IMR-90 (cell line): ENCODE measurements at regions of chr20 and their contacts with region 1.

Region 1: DNA sequence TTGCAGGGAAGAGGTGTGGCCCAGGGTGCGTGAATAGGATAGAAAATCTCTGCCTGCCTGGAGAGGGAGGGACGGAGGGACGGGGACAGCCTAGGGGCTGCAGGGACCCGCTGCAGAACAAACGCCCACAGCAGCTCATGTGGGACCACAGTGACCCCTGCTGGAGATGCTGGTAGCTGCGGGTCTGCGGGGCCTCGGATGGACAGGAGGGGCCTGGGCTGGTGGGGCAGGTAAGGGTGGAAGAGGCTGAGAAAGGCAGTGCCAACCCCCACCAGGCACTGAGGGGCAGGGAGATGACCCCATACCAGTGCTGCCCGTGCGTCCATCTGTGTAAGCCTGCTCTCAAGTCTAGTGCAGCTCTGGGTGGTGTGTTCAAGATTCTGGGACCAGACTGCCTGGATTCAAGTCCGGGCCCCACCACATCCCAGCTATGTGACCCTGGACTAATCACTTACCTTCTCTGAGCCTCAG is 39.4 kb downstream of the KIAA1755 start:
- DNase-seq: peak; percentile 52
- ATAC-seq: peak; percentile 57
- H3K4me3 ChIP-seq: no peak overlapping the region
- H3K27ac ChIP-seq: peak overlapping the region; percentile 6; the same call in 1 of the 2 replicates
- H3K4me1 ChIP-seq: peaks cover 24% of the 10 kb centered on the region
- H3K27me3 ChIP-seq: no peaks in the 10 kb centered on the region
- CTCF ChIP-seq: peak; percentile 89
- POLR2A ChIP-seq: peak; percentile 43; the same call in 1 of the 2 replicates
- RAD21 ChIP-seq: peak; percentile 95

Region 2: DNA sequence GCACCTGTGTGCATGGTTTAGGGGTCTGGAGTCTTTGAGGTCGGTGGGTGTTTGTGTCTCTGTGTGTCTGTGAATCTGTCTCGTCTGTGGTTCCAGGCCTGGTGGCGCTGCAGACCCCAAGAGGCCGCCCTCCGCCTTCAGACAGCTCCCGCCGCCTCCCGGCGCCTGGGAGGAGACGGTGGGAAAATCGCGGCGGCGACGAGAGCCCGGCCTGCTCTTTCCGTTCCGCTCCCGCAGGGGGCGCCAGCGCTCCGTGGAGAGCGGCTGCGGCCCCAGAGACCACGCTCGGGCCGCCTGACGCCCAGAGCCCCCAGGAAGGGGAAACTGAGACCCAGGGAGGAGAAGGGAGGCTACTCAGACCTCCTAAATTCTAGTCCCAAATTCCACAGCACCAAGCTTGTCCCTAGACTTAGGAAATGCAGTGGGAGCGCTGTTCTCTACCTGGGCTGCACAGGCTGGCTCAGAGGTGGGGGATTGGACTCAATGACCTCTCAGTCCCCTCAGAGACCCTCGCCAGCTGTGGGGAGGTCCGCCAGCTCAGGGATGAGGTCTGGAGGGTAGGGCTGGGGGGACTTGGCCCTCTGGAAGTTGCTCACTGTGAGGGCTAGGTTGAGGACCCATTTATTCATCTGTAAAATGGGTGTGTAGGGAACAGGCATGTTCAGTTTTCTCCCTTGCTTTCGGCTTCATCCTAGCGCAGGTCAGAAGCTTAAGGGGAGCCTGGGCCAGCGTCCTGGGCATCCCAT is 656.6 kb before region 1 on chr20:
- CTCF ChIA-PET with region 1: interaction called, 4 read pairs
- POLR2A ChIA-PET with region 1: no interaction called
- dilution Hi-C with region 1: no loop called
- in situ Hi-C with region 1: loop called (anchors 10 kb)
- intact Hi-C with region 1: no loop called
- DNase-seq: no peak
- ATAC-seq: peak; percentile 96
- H3K4me3 ChIP-seq: no peak overlapping the region
- H3K27ac ChIP-seq: no peak overlapping the region
- H3K4me1 ChIP-seq: no peaks in the 10 kb centered on the region; the same call in 1 of the 2 replicates
- H3K27me3 ChIP-seq: peaks cover 53% of the 10 kb centered on the region
- CTCF ChIP-seq: peak; percentile 95
- POLR2A ChIP-seq: no peak
- RAD21 ChIP-seq: peak; percentile 95

Region 3: GRCh38 chr20:37901654-37902503 is 319.3 kb before region 1 on chr20:
- CTCF ChIA-PET with region 1: no interaction called
- POLR2A ChIA-PET with region 1: no interaction called
- dilution Hi-C with region 1: no loop called
- in situ Hi-C with region 1: no loop called
- intact Hi-C with region 1: loop called (anchors 2 kb)
- DNase-seq: peak; percentile 60
- ATAC-seq: peak; percentile 46
- H3K4me3 ChIP-seq: no peak overlapping the region
- H3K27ac ChIP-seq: no peak overlapping the region
- H3K4me1 ChIP-seq: no peaks in the 10 kb centered on the region; the same call in 1 of the 2 replicates
- H3K27me3 ChIP-seq: peaks cover 75% of the 10 kb centered on the region
- CTCF ChIP-seq: peak; percentile 42
- POLR2A ChIP-seq: no peak
- RAD21 ChIP-seq: peak; percentile 50; the same call in 1 of the 2 replicates

Region 4: GRCh38 chr20:38073307-38074071 is 147.7 kb before region 1 on chr20:
- CTCF ChIA-PET with region 1: interaction called, 21 read pairs
- POLR2A ChIA-PET with region 1: no interaction called
- dilution Hi-C with region 1: no loop called
- in situ Hi-C with region 1: no loop called
- intact Hi-C with region 1: loop called (anchors 1 kb)
- DNase-seq: peak; percentile 98
- ATAC-seq: peak; percentile 87
- H3K4me3 ChIP-seq: no peak overlapping the region
- H3K27ac ChIP-seq: peak overlapping the region; percentile 89
- H3K4me1 ChIP-seq: peaks cover 21% of the 10 kb centered on the region
- H3K27me3 ChIP-seq: no peaks in the 10 kb centered on the region
- CTCF ChIP-seq: peak; percentile 89
- POLR2A ChIP-seq: no peak
- RAD21 ChIP-seq: peak; percentile 75

Region 5: GRCh38 chr20:38173237-38174156 is 47.7 kb before region 1 on chr20:
- CTCF ChIA-PET with region 1: interaction called, 11 read pairs
- POLR2A ChIA-PET with region 1: no interaction called
- dilution Hi-C with region 1: no loop called
- in situ Hi-C with region 1: loop called (anchors 5 kb)
- intact Hi-C with region 1: loop called (anchors 2 kb)
- DNase-seq: peak; percentile 92
- ATAC-seq: peak; percentile 85
- H3K4me3 ChIP-seq: no peak overlapping the region
- H3K27ac ChIP-seq: peak overlapping the region; percentile 8; the same call in 1 of the 2 replicates
- H3K4me1 ChIP-seq: peaks cover 30% of the 10 kb centered on the region
- H3K27me3 ChIP-seq: no peaks in the 10 kb centered on the region
- CTCF ChIP-seq: 0 out of 2 replicates have a peak, but pooled peaks have one; percentile 15
- POLR2A ChIP-seq: peak; percentile 52; the same call in 1 of the 2 replicates
- RAD21 ChIP-seq: peak; percentile 31; the same call in 1 of the 2 replicates

Region 6: DNA sequence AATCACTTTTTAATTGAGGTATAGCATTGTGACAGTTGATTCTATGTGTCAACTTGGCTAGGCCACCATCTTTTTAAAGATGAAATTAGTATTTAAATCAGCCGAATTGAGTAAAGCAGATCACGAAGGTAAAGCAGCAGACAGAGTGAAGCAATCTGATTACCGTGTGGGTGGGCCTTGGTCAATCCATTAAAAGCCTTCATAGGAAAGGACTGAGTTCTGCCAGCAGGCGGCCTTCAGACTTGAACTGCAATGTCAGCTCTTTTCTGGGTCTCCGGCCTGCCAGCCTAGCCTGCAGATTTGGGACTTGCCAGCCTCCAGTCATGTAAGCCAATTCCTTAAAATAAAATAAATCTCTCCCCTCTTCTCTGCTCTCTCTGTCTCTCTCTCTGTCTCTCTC is 33.6 kb before region 1 on chr20:
- CTCF ChIA-PET with region 1: no interaction called
- POLR2A ChIA-PET with region 1: no interaction called
- dilution Hi-C with region 1: no loop called
- in situ Hi-C with region 1: no loop called
- intact Hi-C with region 1: no loop called
- DNase-seq: peak; percentile 43
- ATAC-seq: peak; percentile 48
- H3K4me3 ChIP-seq: no peak overlapping the region
- H3K27ac ChIP-seq: no peak overlapping the region
- H3K4me1 ChIP-seq: peaks cover 11% of the 10 kb centered on the region
- H3K27me3 ChIP-seq: no peaks in the 10 kb centered on the region
- CTCF ChIP-seq: 0 out of 2 replicates have a peak, but pooled peaks have one; percentile 14
- POLR2A ChIP-seq: no peak
- RAD21 ChIP-seq: 0 out of 2 replicates have a peak, but pooled peaks have one; percentile 19

Region 7: GRCh38 chr20:38550274-38550673 is 329.1 kb after region 1 on chr20:
- CTCF ChIA-PET with region 1: no interaction called
- POLR2A ChIA-PET with region 1: no interaction called
- dilution Hi-C with region 1: no loop called
- in situ Hi-C with region 1: no loop called
- intact Hi-C with region 1: no loop called
- DNase-seq: no peak
- ATAC-seq: no peak
- H3K4me3 ChIP-seq: no peak overlapping the region
- H3K27ac ChIP-seq: no peak overlapping the region
- H3K4me1 ChIP-seq: no peaks in the 10 kb centered on the region
- H3K27me3 ChIP-seq: no peaks in the 10 kb centered on the region
- CTCF ChIP-seq: no peak
- POLR2A ChIP-seq: no peak
- RAD21 ChIP-seq: no peak

Region 8: GRCh38 chr20:38764567-38765355 is 543.6 kb after region 1 on chr20:
- CTCF ChIA-PET with region 1: no interaction called
- POLR2A ChIA-PET with region 1: no interaction called
- dilution Hi-C with region 1: no loop called
- in situ Hi-C with region 1: no loop called
- intact Hi-C with region 1: no loop called
- DNase-seq: peak; percentile 93
- ATAC-seq: peak; percentile 98
- H3K4me3 ChIP-seq: no peak overlapping the region
- H3K27ac ChIP-seq: no peak overlapping the region
- H3K4me1 ChIP-seq: peaks cover 6% of the 10 kb centered on the region
- H3K27me3 ChIP-seq: no peaks in the 10 kb centered on the region
- CTCF ChIP-seq: no peak
- POLR2A ChIP-seq: no peak
- RAD21 ChIP-seq: no peak